Tibial artery (tissue), 4 donors: ENCODE measurements at regions of chr6 and their contacts with region 1.

Region 1: DNA sequence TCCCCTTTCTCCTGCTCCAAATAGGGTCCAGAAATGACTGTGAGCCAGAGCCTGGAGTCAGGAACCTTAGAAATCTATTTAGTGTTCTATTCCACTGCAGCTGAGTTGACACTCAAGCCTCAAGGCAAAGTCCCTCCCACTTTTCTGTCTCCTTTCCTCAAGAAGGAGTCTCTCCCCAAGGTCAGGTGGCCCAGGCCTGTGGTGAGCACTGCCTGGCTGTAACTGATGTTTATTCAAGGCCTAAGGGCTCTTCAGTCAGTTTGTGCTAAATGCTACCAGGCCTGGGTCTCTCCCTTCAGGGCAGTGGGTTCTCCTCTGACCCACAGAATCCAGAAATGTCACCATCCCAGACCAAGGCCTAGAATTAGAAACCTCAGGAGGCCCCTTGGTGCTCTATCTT is 1042.9 kb upstream of the EPHA7 start:
- DNase-seq: no peak
- H3K4me3 ChIP-seq: no peak overlapping the region
- H3K27ac ChIP-seq: no peak overlapping the region
- H3K4me1 ChIP-seq: no peaks in the 10 kb centered on the region
- H3K27me3 ChIP-seq: no peaks in the 10 kb centered on the region
- CTCF ChIP-seq: no peak

Region 2: GRCh38 chr6:94238868-94239267 is 223.4 kb before region 1 on chr6:
- intact Hi-C with region 1: no loop called
- DNase-seq: no peak
- H3K4me3 ChIP-seq: no peak overlapping the region
- H3K27ac ChIP-seq: no peak overlapping the region
- H3K4me1 ChIP-seq: no peaks in the 10 kb centered on the region
- H3K27me3 ChIP-seq: no peaks in the 10 kb centered on the region
- CTCF ChIP-seq: no peak

Region 3: DNA sequence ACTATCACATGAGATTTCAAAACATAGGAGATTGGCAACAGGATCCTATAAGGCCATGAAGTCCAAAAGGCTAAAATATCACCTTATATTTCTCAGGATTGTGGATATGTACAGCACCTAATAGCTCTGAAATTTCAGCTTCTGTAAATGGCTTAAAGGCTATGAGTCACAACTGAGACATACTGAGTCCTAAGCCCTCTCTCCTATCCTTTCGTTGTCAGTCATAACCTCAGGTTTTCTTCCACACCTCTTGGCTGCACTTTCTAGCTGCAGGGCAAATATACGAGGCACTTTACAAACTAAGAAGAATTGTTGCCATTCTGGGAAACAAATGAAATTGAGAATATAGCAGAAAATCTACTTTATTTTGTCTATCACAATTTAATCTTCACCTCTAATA is 73.0 kb before region 1 on chr6:
- intact Hi-C with region 1: loop called (anchors 2 kb)
- DNase-seq: no peak
- H3K4me3 ChIP-seq: no peak overlapping the region
- H3K27ac ChIP-seq: no peak overlapping the region
- H3K4me1 ChIP-seq: no peaks in the 10 kb centered on the region
- H3K27me3 ChIP-seq: no peaks in the 10 kb centered on the region
- CTCF ChIP-seq: no peak

Region 4: DNA sequence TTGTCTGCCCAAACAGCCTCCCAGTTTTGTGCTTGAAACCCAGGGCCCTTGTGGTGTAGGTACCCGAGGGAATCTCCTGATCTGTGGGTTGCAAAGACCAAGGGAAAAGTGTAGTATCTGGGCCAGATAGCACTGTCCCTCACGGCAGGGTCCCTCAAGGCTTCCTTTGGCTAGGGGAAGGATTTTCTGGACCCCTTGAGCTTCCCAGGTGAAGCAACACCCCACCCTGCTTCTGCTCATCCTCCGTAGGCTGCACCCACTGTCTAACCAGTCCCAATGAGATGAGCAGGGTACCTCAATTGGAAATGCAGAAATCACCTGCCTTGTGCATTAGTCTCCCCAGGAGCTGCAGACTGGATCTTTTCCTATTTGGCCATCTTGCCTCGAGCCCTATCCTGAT is 323.3 kb after region 1 on chr6:
- intact Hi-C with region 1: no loop called
- DNase-seq: no peak
- H3K4me3 ChIP-seq: no peak overlapping the region
- H3K27ac ChIP-seq: no peak overlapping the region
- H3K4me1 ChIP-seq: no peaks in the 10 kb centered on the region
- H3K27me3 ChIP-seq: no peaks in the 10 kb centered on the region
- CTCF ChIP-seq: no peak